Activated CD8-positive, alpha-beta T cell treated with anti-CD3 and anti-CD28 coated beads, Interleukin-2, amount 10 ng/mL, durations not matched to agents 7 days and 5 days (primary cell): ENCODE measurements at regions of chr4 and their contacts with region 1.

Region 1: GRCh38 chr4:71184195-71184781 is 154.5 kb upstream of the SLC4A4 start:
- DNase-seq: peak; percentile 74
- ATAC-seq: no peak
- H3K4me3 Mint-ChIP-seq: no peak overlapping the region
- H3K27ac Mint-ChIP-seq: no peak overlapping the region
- H3K4me1 Mint-ChIP-seq: peaks cover 24% of the 10 kb centered on the region
- H3K27me3 Mint-ChIP-seq: peaks cover 27% of the 10 kb centered on the region

Region 2: DNA sequence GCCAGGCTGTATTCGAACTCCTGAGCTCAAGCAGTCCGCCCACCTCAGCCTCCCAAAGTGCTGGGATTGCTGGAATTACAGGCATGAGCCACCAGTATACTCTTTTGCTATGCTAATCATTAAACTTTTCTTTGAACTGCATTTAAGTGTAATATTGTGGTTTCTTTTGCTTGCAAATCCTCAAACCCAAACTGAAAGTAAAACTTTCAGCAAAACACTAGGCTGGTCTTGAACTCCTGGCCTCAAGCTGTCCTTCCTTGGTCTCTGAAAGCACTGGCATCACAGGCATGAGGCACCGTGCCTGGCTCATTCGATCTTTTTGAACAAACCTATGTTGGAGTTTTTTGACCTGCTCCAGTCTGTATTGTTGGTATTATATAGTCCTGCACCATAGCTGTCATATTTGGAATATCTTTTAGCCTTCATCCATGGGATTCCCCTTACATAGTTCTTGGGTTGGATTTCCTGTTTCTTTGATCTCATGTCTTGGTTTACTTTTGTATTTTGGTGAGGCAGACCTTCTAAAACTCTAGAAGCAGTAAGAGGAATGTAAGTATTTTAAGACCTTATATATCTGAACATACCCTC is 248.0 kb before region 1 on chr4:
- CTCF ChIA-PET with region 1: no interaction called
- POLR2A ChIA-PET with region 1: no interaction called
- DNase-seq: peak; percentile 25
- ATAC-seq: peak; percentile 47
- H3K4me3 Mint-ChIP-seq: no peak overlapping the region
- H3K27ac Mint-ChIP-seq: no peak overlapping the region
- H3K4me1 Mint-ChIP-seq: peaks cover 14% of the 10 kb centered on the region
- H3K27me3 Mint-ChIP-seq: no peaks in the 10 kb centered on the region

Region 3: DNA sequence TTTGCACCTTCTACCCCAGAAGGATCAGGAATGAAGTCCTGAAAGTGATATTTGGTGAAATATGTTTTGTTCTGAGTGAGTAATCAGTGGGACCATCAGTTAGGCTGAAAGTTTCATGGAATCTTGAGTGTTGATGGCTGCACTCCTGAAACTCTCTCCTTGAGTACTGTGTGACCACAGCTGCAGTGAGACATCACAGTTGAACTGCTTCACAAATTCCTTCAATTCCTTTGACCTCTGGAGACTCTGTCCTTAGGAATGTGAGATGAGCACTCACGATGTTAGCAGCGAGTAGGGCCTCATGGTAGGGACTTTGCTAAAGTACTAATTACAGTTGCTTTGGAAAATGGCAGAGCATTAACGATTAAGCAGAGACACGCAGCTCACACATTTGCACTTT is 11.6 kb after region 1 on chr4:
- CTCF ChIA-PET with region 1: interaction called, 16 read pairs
- POLR2A ChIA-PET with region 1: no interaction called
- DNase-seq: no peak
- ATAC-seq: no peak
- H3K4me3 Mint-ChIP-seq: no peak overlapping the region
- H3K27ac Mint-ChIP-seq: no peak overlapping the region
- H3K4me1 Mint-ChIP-seq: peaks cover 24% of the 10 kb centered on the region
- H3K27me3 Mint-ChIP-seq: peaks cover 27% of the 10 kb centered on the region